Activated CD8-positive, alpha-beta T cell treated with anti-CD3 and anti-CD28 coated beads for 36 hours (primary cell): ENCODE measurements at regions of chr22 and their contacts with region 1.

Region 1: GRCh38 chr22:39808081-39808480 is 85.5 kb downstream of the ENTHD1 start:
- DNase-seq: peak; percentile 65
- ATAC-seq: no peak
- H3K4me3 Mint-ChIP-seq: no peak overlapping the region
- H3K27ac Mint-ChIP-seq: no peak overlapping the region
- H3K4me1 Mint-ChIP-seq: peaks cover 15% of the 10 kb centered on the region
- H3K27me3 Mint-ChIP-seq: peaks cover 5% of the 10 kb centered on the region
- CTCF ChIP-seq: peak; percentile 60

Region 2: DNA sequence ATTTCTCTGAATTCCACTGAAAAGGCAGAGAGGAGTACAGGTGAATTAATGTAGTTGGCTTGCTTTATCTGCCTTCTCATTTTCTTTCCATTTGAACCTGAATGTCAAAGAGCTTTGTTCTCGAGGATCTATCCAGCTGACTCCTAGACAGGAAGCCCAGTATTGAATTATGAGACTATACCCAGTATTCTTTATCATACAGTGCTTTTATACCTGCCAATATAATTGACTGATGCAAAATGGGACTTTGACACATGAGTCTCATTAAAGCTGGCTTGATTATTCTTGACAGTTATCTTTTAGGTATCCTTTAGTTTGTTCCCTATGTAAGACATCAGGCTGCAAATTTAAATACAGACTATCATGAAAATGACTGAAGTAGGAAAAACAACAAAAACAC is 31.8 kb before region 1 on chr22:
- CTCF ChIA-PET with region 1: interaction called, 10 read pairs
- POLR2A ChIA-PET with region 1: no interaction called
- intact Hi-C with region 1: no loop called
- DNase-seq: no peak
- ATAC-seq: no peak
- H3K4me3 Mint-ChIP-seq: no peak overlapping the region
- H3K27ac Mint-ChIP-seq: no peak overlapping the region
- H3K4me1 Mint-ChIP-seq: peaks cover 17% of the 10 kb centered on the region
- H3K27me3 Mint-ChIP-seq: no peaks in the 10 kb centered on the region
- CTCF ChIP-seq: no peak